Caco-2 (cell line): ENCODE measurements at regions of chr9 and their contacts with region 1.

Region 1: DNA sequence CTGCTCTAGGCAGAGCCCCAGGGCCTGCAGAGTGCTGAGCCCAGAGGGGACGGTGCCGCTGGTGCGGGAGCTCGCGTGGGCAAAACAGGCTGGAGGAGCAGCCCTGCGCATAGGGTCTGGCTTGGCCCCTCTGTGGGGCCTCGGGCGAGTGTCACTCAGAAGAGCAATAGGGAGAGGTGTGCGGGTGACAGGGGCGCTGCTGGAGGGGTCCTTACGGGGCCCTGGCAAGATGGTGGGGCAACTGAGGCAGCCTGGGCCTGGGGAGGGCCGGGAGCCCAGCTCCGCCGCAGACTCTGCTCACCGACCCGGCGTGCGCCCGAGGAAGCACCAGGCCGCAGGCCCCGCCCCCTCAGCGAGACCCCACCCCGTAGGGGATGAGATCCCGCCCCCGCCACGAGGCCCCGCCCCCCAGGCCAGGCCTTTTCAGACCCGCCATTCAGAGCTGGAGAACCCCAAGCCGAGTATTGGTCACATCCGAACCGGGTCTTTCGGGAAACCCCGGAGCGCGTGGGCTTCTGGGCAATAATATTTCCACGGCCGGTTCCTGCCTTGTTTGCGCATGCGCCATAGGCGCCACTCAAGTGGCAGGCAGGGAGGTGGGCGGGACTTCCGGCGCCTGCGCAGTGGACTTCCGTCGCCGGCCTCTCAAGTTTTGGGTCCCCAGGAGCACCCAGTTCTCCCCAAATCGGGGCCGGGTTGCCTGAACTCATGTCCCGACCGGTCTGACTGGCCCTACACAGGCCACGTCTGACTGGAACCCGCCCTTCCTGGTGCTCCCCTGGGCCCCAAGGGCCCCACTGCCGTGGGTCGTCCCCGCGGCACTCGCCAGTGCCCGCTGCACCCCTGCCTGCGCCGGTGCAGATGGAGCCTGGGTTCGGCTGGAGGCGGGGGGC is 1.3 kb upstream of the RNF208 start:
- DNase-seq: peak; percentile 97 to 99
- H3K4me3 ChIP-seq: peak overlapping the region; percentile 69
- H3K4me3 Mint-ChIP-seq: peak overlapping the region; percentile 85
- H3K27ac Mint-ChIP-seq: no peak overlapping the region
- H3K4me1 ChIP-seq: peaks cover 21% of the 10 kb centered on the region
- H3K4me1 Mint-ChIP-seq: peaks cover 13% of the 10 kb centered on the region
- H3K27me3 ChIP-seq: no peaks in the 10 kb centered on the region
- H3K27me3 Mint-ChIP-seq: no peaks in the 10 kb centered on the region
- CTCF ChIP-seq: no peak

Region 2: DNA sequence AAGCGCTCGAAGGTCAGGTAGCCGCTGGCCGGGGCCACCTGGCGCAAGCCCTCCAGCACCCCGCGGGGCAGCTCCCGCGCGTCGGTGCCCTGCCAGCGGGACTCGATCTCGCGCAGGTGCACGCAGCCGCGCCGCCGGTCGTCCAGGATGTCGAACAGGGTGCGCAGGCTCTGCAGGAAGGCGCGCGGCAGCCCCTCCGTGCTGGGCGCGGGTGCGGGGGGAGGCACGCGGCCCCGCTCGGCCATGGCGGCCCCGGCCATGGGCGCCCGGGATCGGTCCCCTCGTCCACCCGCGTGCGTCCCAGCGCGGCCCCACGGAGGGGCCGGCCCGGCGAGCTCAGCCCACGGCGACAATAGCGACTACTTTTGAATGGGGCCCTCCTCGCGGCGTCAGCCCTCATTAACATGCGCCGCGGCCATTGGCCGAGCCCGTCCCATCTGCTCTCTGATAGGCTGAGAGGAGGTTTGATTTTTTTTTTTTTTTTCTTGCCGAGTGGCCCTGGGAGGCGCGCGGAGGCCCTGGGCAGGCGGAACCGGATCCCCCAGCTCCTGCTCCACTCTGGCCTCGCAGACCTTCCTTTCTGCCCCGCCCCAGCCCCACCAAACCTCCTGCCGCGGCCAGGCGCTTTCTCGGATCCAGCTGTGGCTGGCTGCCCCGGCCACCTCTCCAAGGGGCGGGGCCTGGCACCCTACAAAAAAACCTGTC is 153.0 kb before region 1 on chr9 and contains the start of gene SAPCD2:
- CTCF ChIA-PET with region 1: interaction called, 10 read pairs
- POLR2A ChIA-PET with region 1: no interaction called
- intact Hi-C with region 1: no loop called
- DNase-seq: peak; percentile 95
- H3K4me3 ChIP-seq: peak within 1 kb of the TSS; percentile 80
- H3K4me3 Mint-ChIP-seq: peak within 1 kb of the TSS; percentile 68
- H3K27ac Mint-ChIP-seq: peak within 1 kb of the TSS; percentile 85
- H3K4me1 ChIP-seq: peaks cover 33% of the 10 kb centered on the region
- H3K4me1 Mint-ChIP-seq: peaks cover 18% of the 10 kb centered on the region
- H3K27me3 ChIP-seq: no peaks in the 10 kb centered on the region
- H3K27me3 Mint-ChIP-seq: no peaks in the 10 kb centered on the region
- CTCF ChIP-seq: no peak
- total RNA-seq, gene SAPCD2: 53.3 and 57.5 TPM in 2 replicates

Region 3: GRCh38 chr9:137115392-137116026 is 107.8 kb before region 1 on chr9:
- CTCF ChIA-PET with region 1: no interaction called
- POLR2A ChIA-PET with region 1: no interaction called
- intact Hi-C with region 1: loop called (anchors 2 kb)
- DNase-seq: no peak
- H3K4me3 ChIP-seq: peak overlapping the region; percentile 70
- H3K4me3 Mint-ChIP-seq: peak overlapping the region; percentile 66
- H3K27ac Mint-ChIP-seq: peak overlapping the region; percentile 64
- H3K4me1 ChIP-seq: peaks cover 29% of the 10 kb centered on the region
- H3K4me1 Mint-ChIP-seq: peaks cover 17% of the 10 kb centered on the region
- H3K27me3 ChIP-seq: no peaks in the 10 kb centered on the region
- H3K27me3 Mint-ChIP-seq: no peaks in the 10 kb centered on the region
- CTCF ChIP-seq: no peak

Region 4: DNA sequence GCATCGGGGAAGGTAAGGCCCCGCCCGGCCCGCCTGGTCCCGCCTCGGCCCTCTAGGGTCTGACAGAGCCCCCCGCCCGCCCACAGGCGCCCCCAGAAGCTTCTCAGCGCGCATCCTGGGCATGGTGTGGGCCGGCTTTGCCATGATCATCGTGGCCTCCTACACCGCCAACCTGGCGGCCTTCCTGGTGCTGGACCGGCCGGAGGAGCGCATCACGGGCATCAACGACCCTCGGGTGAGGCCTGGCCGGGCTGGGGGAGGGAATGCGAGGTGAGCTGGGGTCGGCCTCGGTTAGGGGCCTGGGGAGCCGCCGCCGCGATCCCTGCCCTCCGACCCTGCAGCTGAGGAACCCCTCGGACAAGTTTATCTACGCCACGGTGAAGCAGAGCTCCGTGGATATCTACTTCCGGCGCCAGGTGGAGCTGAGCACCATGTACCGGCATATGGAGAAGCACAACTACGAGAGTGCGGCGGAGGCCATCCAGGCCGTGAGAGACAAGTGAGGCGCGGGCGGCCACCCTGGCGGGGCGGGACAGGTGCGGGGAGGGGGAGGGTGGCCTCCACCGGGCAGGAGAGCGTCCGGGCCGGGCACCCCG is 60.7 kb before region 1 on chr9:
- CTCF ChIA-PET with region 1: interaction called, 11 read pairs
- POLR2A ChIA-PET with region 1: no interaction called
- intact Hi-C with region 1: loop called (anchors 2 kb)
- DNase-seq: peak; percentile 62 to 66
- H3K4me3 ChIP-seq: peak overlapping the region; percentile 46
- H3K4me3 Mint-ChIP-seq: peak overlapping the region; percentile 72
- H3K27ac Mint-ChIP-seq: no peak overlapping the region
- H3K4me1 ChIP-seq: peaks cover 2% of the 10 kb centered on the region; the same call in 1 of the 2 replicates
- H3K4me1 Mint-ChIP-seq: peaks cover 6% of the 10 kb centered on the region
- H3K27me3 ChIP-seq: peaks cover 2% of the 10 kb centered on the region
- H3K27me3 Mint-ChIP-seq: peaks cover 16% of the 10 kb centered on the region
- CTCF ChIP-seq: peak in 1 of 2 experiments; percentile 42

Region 5: DNA sequence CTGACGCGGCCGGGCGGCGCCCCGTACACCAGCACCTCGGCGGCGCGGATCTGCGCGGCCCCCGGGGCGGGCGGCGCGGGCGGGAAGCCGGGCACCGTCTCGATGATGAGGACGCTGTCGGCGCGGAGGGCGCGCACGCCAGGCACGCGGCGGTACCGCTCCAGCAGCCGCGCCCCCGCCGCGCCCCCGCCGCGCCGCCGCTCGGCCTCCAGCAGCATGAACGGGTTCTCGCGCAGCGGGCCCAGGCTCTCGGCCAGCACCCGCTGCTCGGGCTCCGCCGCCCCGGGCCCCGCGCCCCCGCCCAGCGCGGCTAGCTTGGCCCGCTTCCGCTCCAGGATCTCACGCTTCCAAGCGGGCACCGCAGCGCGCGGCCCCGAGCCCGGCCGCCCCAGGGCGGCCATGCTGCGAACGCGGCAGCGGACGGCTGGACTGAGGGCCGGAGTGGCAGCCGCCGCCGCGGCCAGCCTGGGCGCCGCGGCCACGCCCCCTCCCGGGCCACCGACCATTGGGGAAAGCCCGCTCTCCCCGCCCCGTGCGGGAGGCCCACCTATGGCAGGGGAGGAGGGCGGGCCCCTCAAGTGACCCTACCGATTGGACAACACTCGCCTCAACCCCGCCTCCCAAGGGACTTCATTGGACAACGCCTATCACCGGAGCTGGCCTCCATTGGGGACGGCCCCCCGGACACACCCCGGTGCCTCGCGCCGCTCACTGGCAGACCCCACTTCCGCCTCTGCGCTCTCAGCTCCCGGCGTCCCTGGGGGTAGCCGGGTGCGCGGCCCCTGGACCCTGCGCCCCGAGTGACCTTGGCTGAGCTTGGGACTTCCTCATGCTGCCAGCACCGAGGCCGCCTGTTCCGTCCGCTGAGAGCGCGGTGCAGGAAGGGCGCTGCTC is 22.8 kb before region 1 on chr9 and contains the start of gene TPRN:
- CTCF ChIA-PET with region 1: interaction called, 4 read pairs
- POLR2A ChIA-PET with region 1: interaction called, 10 read pairs
- intact Hi-C with region 1: loop called (anchors 1 kb)
- DNase-seq: peak; percentile 100
- H3K4me3 ChIP-seq: peak within 1 kb of the TSS; percentile 80
- H3K4me3 Mint-ChIP-seq: peak within 1 kb of the TSS; percentile 78
- H3K27ac Mint-ChIP-seq: peak within 1 kb of the TSS; percentile 64
- H3K4me1 ChIP-seq: peaks cover 37% of the 10 kb centered on the region
- H3K4me1 Mint-ChIP-seq: peaks cover under 1% of the 10 kb centered on the region
- H3K27me3 ChIP-seq: no peaks in the 10 kb centered on the region
- H3K27me3 Mint-ChIP-seq: no peaks in the 10 kb centered on the region
- CTCF ChIP-seq: no peak
- total RNA-seq, gene TPRN: 34.2 and 37.7 TPM in 2 replicates